Activated naive CD4-positive, alpha-beta T cell treated with anti-CD3 and anti-CD28 coated beads, Interleukin-2, amount 10 ng/mL, durations not matched to agents 7 days and 5 days (primary cell): ENCODE measurements at regions of chr19 and their contacts with region 1.

Region 1: GRCh38 chr19:42596391-42597072 is 1.8 kb upstream of the CEACAM8 start:
- DNase-seq: peak; percentile 52
- H3K4me3 Mint-ChIP-seq: no peak overlapping the region
- H3K27ac Mint-ChIP-seq: no peak overlapping the region
- H3K4me1 Mint-ChIP-seq: no peaks in the 10 kb centered on the region
- H3K27me3 Mint-ChIP-seq: peaks cover 20% of the 10 kb centered on the region

Region 2: GRCh38 chr19:42301656-42302203 is 294.8 kb before region 1 on chr19 and contains the start of gene PRR19:
- CTCF ChIA-PET with region 1: no interaction called
- DNase-seq: peak; percentile 40
- H3K4me3 Mint-ChIP-seq: peak within 1 kb of the TSS; percentile 88
- H3K27ac Mint-ChIP-seq: peak within 1 kb of the TSS; percentile 89
- H3K4me1 Mint-ChIP-seq: peaks cover 26% of the 10 kb centered on the region
- H3K27me3 Mint-ChIP-seq: peaks cover 15% of the 10 kb centered on the region

Region 3: DNA sequence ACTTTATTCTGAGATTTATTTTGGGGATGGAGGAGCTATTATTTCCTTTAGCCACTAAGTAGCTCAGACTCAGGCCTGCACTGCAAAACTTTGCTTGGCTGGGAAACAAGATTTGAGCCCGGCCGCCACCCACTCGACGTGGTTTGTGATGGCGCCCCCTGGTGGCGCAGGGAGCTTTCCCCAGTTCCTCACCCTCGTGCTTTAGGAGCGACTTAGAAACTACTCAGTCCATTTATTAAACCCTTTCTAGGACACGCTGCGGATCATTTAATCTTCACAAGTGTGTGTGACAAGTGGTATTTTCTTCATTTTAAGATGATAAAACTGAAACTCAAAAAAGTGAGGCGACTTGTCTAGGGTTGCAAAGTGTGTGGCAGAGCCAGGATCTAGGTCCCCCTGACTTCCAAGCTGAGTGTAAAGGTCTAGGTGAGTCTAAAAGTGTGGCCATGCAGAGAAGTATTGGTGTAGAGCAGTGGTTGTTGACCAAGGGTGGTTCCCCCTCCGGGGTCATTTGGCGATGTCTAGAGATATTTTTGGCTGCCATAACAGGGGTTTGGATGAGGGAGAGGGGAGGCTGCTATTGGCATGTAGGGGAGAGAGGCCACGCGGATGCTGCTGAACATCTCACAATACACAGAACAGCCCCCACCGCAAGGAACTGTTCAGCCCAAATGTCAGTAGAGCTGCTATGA is 156.0 kb before region 1 on chr19:
- CTCF ChIA-PET with region 1: interaction called, 10 read pairs
- DNase-seq: peak; percentile 85
- H3K4me3 Mint-ChIP-seq: no peak overlapping the region
- H3K27ac Mint-ChIP-seq: no peak overlapping the region
- H3K4me1 Mint-ChIP-seq: peaks cover 23% of the 10 kb centered on the region
- H3K27me3 Mint-ChIP-seq: peaks cover 47% of the 10 kb centered on the region

Region 4: DNA sequence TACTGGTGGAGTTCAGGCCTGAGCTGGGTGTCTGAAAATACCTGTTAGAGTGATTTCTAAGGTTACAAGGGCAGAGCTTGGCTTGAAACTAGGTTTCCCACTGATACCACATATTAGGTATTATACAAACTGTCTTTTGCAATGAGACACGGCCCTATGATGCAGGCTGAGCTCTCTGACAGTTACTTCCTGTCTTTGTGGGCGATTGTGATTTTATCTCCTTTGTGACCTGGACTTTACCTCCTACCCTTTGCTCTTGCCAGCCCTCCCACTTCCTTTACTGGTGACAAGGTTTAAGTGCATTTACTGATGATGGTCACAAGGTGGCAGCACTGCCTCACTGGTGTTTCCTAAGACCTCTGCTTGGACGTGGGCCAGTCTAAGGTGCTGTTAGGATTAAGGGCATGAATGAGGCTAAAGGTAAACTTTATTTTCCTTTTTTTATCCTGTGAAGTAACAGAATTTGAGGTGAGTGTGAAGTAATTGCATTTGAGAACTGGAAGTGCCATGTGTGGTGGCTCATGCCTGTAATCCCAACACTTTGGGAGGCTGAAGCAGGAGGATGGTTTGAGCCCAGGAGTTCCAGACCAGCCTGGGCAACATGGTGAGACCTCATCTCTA is 146.1 kb before region 1 on chr19:
- CTCF ChIA-PET with region 1: interaction called, 16 read pairs
- DNase-seq: peak; percentile 86
- H3K4me3 Mint-ChIP-seq: no peak overlapping the region
- H3K27ac Mint-ChIP-seq: no peak overlapping the region
- H3K4me1 Mint-ChIP-seq: peaks cover 33% of the 10 kb centered on the region
- H3K27me3 Mint-ChIP-seq: peaks cover 16% of the 10 kb centered on the region

Region 5: GRCh38 chr19:42529248-42529764 is 67.2 kb before region 1 on chr19:
- CTCF ChIA-PET with region 1: interaction called, 10 read pairs
- DNase-seq: peak; percentile 77
- H3K4me3 Mint-ChIP-seq: peak overlapping the region; percentile 82
- H3K27ac Mint-ChIP-seq: peak overlapping the region; percentile 81
- H3K4me1 Mint-ChIP-seq: peaks cover 48% of the 10 kb centered on the region
- H3K27me3 Mint-ChIP-seq: peaks cover 7% of the 10 kb centered on the region

Region 6: GRCh38 chr19:42563352-42564210 is 33.0 kb before region 1 on chr19:
- CTCF ChIA-PET with region 1: interaction called, 14 read pairs
- DNase-seq: peak; percentile 30
- H3K4me3 Mint-ChIP-seq: no peak overlapping the region
- H3K27ac Mint-ChIP-seq: no peak overlapping the region
- H3K4me1 Mint-ChIP-seq: no peaks in the 10 kb centered on the region
- H3K27me3 Mint-ChIP-seq: peaks cover 39% of the 10 kb centered on the region

Region 7: GRCh38 chr19:42573642-42574041 is 22.9 kb before region 1 on chr19:
- CTCF ChIA-PET with region 1: interaction called, 10 read pairs
- DNase-seq: no peak
- H3K4me3 Mint-ChIP-seq: no peak overlapping the region
- H3K27ac Mint-ChIP-seq: no peak overlapping the region
- H3K4me1 Mint-ChIP-seq: no peaks in the 10 kb centered on the region
- H3K27me3 Mint-ChIP-seq: peaks cover 6% of the 10 kb centered on the region

Region 8: DNA sequence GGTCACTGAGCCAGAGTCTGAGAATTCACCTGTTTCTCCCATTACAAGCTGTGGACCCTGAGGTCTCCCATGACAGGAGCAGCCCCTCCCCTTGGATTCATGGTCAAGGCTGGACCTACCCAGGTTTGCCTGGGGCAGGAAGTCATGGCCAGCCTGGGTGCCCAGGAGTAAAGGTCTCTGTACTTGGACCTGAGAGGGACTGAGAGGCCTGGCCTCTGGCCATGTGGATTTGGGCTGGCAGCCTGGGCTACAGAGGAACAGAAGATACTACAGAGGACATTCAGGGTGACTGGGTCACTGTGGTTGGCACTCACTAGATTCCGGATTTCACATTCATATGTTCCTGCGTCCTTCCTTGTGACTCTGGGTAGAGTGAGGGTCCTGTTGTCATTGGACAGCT is 29.6 kb after region 1 on chr19:
- CTCF ChIA-PET with region 1: no interaction called
- DNase-seq: no peak
- H3K4me3 Mint-ChIP-seq: no peak overlapping the region
- H3K27ac Mint-ChIP-seq: no peak overlapping the region
- H3K4me1 Mint-ChIP-seq: peaks cover 4% of the 10 kb centered on the region
- H3K27me3 Mint-ChIP-seq: peaks cover 6% of the 10 kb centered on the region